Heart left ventricle (tissue), 16 donors: ENCODE measurements at regions of chrX and their contacts with region 1.

Region 1: DNA sequence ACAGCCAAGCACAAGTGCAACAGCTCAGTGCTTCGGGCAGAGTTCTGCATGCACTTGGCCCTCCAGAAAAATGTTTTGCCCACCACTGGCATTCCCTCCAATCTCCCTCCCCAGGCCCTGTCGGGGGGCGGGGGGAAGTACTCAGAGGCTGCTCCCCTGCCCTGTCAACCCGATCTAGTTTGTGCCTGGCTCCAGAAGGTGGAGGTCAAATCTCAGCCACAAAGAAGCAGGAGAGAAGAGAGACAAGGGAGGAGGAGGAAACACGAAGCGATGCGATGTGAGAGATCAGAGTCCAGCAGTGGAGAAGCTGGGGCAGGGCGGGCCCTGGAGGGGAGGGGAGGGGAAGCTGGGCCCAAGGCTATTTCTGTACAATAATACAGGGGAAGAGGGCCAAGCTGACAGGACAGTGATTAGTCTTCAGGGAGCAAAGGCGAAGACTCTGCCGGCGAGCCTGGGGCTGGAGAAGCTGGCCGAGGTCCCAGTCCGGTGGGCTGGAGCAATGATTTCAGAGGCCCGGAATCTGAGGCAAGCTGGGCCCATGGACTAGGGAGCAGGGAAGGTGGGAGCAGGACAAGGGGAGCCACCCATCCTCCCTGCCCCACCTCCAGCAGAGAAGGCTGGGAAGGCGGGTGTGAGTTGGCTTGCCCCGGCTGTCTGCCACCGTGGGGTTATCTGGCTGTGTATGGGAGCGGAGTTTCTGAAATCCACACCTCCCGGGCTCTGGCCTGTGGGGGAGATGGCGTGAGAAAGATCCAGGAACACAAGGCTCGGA is 167.1 kb downstream of the EFNB1 start:
- DNase-seq: peak; percentile 69 to 75 (median 72)
- ATAC-seq: peak; percentile 85 to 92 (median 86)
- H3K4me3 ChIP-seq: peak overlapping the region in 8 of 12 donors; percentile 3 to 35 (median 23)
- H3K27ac ChIP-seq: peak overlapping the region; percentile 47 to 82 (median 72)
- H3K4me1 ChIP-seq: peaks cover 0 to 48% (median 27%) of the 10 kb centered on the region in 12 donors
- H3K27me3 ChIP-seq: peaks cover 0 to 16% (median 0%) of the 10 kb centered on the region in 9 donors
- CTCF ChIP-seq: no peak
- POLR2A ChIP-seq: no peak

Region 2: DNA sequence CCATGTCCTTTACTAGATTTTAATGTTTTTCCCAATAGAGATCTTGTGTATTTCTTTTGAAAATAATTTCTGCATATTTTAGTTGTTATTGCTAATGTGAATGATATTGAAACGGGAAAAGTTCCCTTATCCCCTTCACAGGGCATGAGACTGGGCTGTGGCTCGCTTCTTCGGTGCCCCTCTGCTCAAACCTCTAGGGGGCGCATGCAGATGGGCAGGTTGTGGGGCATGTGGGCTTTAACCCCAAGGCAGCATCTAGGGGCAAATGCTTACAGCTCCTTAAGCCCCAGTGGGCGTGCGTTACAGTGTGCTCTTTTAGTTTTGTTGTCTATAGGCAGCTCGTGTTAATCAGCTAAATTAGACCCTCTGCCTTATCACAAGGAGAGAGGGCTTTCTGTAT is 757.4 kb before region 1 on chrX:
- intact Hi-C with region 1: no loop called
- DNase-seq: no peak
- ATAC-seq: no peak
- H3K4me3 ChIP-seq: no peak overlapping the region
- H3K27ac ChIP-seq: no peak overlapping the region
- H3K4me1 ChIP-seq: no peaks in the 10 kb centered on the region
- H3K27me3 ChIP-seq: no peaks in the 10 kb centered on the region
- CTCF ChIP-seq: peak in 4 of 12 donors; percentile 9 to 41 (median 19)
- POLR2A ChIP-seq: no peak

Region 3: GRCh38 chrX:68746988-68747387 is 249.0 kb before region 1 on chrX:
- intact Hi-C with region 1: no loop called
- DNase-seq: no peak
- ATAC-seq: no peak
- H3K4me3 ChIP-seq: no peak overlapping the region
- H3K27ac ChIP-seq: no peak overlapping the region
- H3K4me1 ChIP-seq: no peaks in the 10 kb centered on the region
- H3K27me3 ChIP-seq: peaks cover 0 to 6% (median 0%) of the 10 kb centered on the region in 9 donors
- CTCF ChIP-seq: no peak
- POLR2A ChIP-seq: no peak

Region 4: DNA sequence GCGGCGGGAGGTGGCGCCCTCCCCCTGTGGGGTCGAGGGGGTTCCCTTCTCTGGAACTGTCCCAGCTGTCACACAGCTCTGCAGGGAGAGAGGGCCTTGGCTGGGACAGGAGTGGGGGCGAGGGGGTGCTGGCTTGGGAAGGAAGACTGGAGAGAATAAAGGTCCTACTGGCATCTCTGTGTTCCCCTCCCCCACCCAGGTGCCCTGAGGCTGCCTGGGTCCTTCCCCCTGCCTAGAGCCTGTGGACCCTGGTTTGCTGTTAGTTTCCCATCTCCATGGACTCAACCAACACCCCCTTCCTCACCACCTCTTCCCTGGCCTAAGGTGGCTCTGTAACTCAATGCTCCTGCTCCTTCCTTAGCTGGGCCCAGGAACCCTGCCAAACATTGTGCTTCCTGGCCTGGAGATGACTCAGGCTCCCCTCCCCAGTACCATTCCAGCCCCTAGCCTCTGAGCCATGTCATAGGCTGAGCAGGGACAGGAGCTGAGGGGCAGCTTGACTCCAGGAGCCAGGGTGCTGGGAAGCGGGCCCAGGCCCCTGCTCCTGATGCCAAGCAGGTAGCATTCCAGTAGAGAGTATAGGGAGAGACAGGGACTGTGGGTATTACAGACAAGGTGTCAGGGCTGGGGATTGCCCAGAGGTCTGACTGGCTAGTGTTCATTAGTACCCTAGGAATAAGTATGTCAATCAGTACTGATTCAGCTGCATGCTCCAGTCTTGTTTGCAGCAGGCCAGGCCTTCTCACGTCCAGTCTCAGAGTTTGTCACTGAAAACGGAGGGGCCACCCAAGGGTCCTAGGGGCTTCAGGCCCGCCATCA is 66.4 kb before region 1 on chrX:
- intact Hi-C with region 1: loop called in 3 of 10 experiments (anchors 5 to 10 kb)
- DNase-seq: peak; percentile 26 to 77 (median 54)
- ATAC-seq: peak in 3 of 4 donors; percentile 68 to 74 (median 68)
- H3K4me3 ChIP-seq: no peak overlapping the region
- H3K27ac ChIP-seq: peak overlapping the region in 11 of 12 donors; percentile 27 to 87 (median 56)
- H3K4me1 ChIP-seq: peaks cover 0 to 47% (median 14%) of the 10 kb centered on the region in 12 donors
- H3K27me3 ChIP-seq: no peaks in the 10 kb centered on the region
- CTCF ChIP-seq: no peak
- POLR2A ChIP-seq: peak in 1 of 2 donors; percentile 16

Region 5: GRCh38 chrX:68936608-68937007 is 59.4 kb before region 1 on chrX:
- intact Hi-C with region 1: loop called in 6 of 10 experiments (anchors 2 to 10 kb)
- DNase-seq: no peak
- ATAC-seq: peak in 2 of 4 donors; percentile 57 to 63
- H3K4me3 ChIP-seq: no peak overlapping the region
- H3K27ac ChIP-seq: peak overlapping the region in 2 of 12 donors; percentile 19 to 38
- H3K4me1 ChIP-seq: peaks cover 0 to 36% (median 14%) of the 10 kb centered on the region in 12 donors
- H3K27me3 ChIP-seq: peaks cover 0 to 2% (median 0%) of the 10 kb centered on the region in 9 donors
- CTCF ChIP-seq: no peak
- POLR2A ChIP-seq: no peak

Region 6: DNA sequence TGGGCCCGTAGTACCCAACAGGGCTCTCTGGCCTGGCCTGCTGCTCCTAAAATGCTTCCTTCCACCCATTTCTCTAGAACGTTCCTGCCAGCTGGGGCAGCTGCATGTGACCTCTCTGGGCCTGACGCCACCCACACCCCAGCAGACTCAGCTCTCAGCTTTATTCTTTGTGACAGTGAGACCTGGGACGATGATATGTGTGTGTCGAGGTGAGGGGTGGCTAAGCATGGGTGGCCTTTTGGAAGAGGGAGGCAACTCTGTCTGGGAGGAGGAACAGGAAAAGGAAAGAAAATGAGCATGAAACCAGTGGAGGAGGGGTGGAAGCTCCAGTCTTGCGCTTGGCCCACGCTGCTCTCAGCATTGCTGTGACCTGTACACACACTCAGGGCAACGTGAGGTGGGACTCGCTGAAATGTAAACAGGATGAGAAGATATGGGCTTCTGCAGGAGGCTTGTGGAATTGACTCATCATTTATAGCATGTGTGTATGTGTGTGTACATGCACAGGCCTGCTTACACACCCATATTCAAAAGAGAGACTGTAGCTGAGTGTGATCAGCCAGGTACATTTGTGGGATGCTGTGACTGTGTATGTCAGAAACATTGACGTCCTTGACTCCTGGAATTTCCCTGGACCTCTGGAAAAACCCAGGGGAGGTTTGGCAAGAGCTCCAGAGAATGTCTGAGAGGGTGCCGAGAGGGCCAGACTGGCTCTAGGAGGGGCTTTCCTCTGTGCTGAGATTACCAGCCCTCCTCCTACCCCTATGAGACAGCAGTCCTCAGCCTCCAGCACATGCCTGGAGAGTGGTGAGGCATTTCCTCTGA is 31.4 kb after region 1 on chrX:
- intact Hi-C with region 1: loop called in 1 of 10 experiments (anchors 2 kb)
- DNase-seq: no peak
- ATAC-seq: peak in 1 of 4 donors; percentile 71
- H3K4me3 ChIP-seq: no peak overlapping the region
- H3K27ac ChIP-seq: peak overlapping the region in 1 of 12 donors; percentile 1
- H3K4me1 ChIP-seq: peaks cover 0 to 34% (median 12%) of the 10 kb centered on the region in 12 donors
- H3K27me3 ChIP-seq: peaks cover 0 to 5% (median 0%) of the 10 kb centered on the region in 9 donors
- CTCF ChIP-seq: no peak
- POLR2A ChIP-seq: no peak

Region 7: DNA sequence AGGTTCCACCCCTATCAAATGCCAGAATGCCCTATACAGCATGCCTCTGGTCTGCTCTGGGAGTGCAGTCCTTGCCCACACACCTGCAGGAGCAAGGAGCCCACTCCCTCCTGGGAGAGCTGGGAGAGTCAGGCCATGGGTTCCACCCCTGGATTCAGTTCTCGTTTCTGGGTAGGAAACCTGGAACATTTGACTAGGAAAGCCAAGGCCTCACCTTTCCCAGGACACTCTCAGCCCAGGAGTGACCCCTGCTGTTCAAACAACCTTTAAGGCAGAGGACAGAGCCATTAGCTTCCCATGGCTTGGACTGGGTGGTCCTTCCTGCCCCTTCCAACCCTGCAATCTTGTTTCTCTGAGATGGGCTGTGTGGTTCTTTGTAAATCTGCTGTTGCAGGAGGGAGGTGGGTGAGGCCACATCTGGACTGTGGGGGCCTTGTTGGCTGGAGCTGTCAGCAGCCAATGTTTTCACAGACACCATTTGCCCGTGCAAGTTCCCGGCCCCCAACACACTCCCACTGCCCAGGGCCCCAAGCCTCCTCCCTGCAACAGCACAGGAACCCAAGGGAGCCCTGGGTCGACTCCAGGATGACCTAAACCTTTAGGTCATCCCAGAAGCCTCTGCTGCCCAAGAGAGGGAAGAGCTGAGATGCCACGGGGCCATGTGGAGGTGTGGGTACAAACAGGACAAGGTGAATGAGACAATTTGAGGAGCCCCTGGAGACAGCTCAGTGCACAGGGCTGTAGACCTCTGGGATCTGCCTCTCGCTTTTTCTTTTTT is 64.9 kb after region 1 on chrX:
- intact Hi-C with region 1: no loop called
- DNase-seq: peak in 4 of 5 donors; percentile 38 to 54 (median 43)
- ATAC-seq: peak; percentile 61 to 91 (median 80)
- H3K4me3 ChIP-seq: no peak overlapping the region
- H3K27ac ChIP-seq: no peak overlapping the region
- H3K4me1 ChIP-seq: peaks cover 0 to 6% (median 0%) of the 10 kb centered on the region in 12 donors
- H3K27me3 ChIP-seq: peaks cover 0 to 18% (median 0%) of the 10 kb centered on the region in 9 donors
- CTCF ChIP-seq: peak; percentile 14 to 63 (median 49)
- POLR2A ChIP-seq: no peak

Region 8: DNA sequence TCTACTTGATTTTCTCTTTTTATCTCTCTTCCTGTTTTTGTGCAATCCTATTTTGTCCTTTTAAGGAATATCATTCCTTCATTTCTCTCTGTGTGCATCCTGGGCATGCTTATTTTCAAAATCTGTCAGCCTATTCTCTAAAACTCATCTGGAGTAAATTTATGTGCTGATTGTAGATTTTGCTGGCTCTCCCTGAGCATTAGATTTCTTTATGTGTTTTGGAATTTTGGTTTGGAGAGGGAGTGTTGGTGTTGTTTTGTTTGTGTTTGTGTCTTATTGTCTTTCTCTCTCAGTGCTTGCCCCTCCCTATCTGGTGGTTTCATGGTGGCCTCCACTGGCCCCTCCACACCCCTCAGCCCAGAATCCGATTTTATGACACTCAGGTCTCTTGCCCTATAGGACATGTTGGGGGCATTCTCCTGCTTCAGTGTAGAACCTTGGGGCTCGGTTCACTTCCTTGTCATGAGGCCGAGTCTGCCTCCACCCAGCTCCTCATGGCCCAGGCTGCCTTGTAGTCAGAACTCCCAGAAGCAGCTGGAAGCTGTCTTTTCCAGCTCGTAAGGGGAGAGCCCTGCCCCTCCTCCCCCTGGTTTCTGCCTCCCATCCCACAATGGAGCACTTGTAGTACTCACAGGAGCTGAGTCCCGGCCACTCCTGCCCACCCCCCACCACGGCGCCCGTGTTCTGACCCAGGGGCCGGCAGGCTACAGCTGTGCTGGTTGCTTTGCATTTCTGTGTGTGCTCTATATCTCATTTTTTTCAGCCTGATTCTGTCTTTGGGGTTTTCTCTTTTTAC is 193.8 kb after region 1 on chrX:
- intact Hi-C with region 1: no loop called
- DNase-seq: peak in 3 of 5 donors; percentile 23 to 65 (median 29)
- ATAC-seq: peak; percentile 49 to 66 (median 56)
- H3K4me3 ChIP-seq: no peak overlapping the region
- H3K27ac ChIP-seq: peak overlapping the region in 3 of 12 donors; percentile 19 to 34 (median 29)
- H3K4me1 ChIP-seq: no peaks in the 10 kb centered on the region
- H3K27me3 ChIP-seq: peaks cover 0 to 21% (median 0%) of the 10 kb centered on the region in 9 donors
- CTCF ChIP-seq: no peak
- POLR2A ChIP-seq: no peak